Left ventricle myocardium superior (tissue), 1 donor: ENCODE measurements at regions of chr6 and their contacts with region 1.

Region 1: GRCh38 chr6:49531774-49532569 is 18.5 kb upstream of the C6orf141 start:
- DNase-seq: no peak
- ATAC-seq: peak; percentile 38

Region 2: GRCh38 chr6:49202924-49203536 is 328.9 kb before region 1 on chr6:
- intact Hi-C with region 1: no loop called
- DNase-seq: no peak
- ATAC-seq: no peak

Region 3: GRCh38 chr6:49606696-49607390 is 74.9 kb after region 1 on chr6:
- intact Hi-C with region 1: loop called (anchors 5 kb)
- DNase-seq: no peak
- ATAC-seq: peak; percentile 39

Region 4: DNA sequence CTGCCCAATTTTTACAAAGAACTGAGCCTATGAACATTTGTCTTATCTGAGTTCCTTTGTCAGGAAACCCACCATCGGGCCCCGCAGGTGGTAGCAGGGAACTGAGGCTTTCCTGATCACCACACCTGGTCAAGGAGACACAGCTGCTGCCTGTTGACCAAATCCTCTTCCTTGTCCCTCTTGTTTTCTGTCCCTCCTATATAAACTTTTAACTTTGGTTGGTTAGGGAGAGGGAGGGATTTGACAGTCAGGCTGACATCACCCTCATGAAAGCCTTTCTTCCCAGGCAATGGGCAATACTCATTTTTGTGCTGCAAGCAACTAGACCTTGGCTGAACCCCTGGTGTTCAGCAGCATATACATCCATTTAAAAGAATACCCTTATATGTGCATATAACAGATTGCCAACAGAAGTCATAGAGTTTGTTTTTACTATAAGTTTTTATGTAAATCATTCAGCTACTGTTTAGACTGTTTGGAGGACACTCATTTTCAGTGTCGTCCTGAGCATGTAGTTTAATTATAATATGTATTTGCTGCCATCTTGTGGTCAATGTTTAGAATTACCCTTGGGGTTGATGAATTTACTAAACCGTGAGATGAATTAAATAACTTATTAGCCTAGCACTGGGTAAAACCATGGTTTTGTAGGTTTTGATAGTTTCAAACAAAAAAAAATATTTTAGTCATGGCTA is 317.4 kb after region 1 on chr6:
- intact Hi-C with region 1: loop called (anchors 10 kb)
- DNase-seq: no peak
- ATAC-seq: no peak